CD8-positive, alpha-beta T cell (primary cell): ENCODE measurements at regions of chrX and their contacts with region 1.

Region 1: GRCh38 chrX:48737213-48737938 is 24.2 kb upstream of the GLOD5 start:
- DNase-seq: peak; percentile 73 to 97 (median 82)
- ATAC-seq: peak; percentile 95
- H3K4me3 ChIP-seq: peak overlapping the region; percentile 68 to 75
- H3K4me3 Mint-ChIP-seq: peak overlapping the region; percentile 95
- H3K27ac ChIP-seq: peak overlapping the region; percentile 76 to 94
- H3K27ac Mint-ChIP-seq: peak overlapping the region; percentile 98
- H3K4me1 ChIP-seq: peaks cover 16% of the 10 kb centered on the region
- H3K4me1 Mint-ChIP-seq: peaks cover 15% of the 10 kb centered on the region
- H3K27me3 ChIP-seq: no peaks in the 10 kb centered on the region
- H3K27me3 Mint-ChIP-seq: no peaks in the 10 kb centered on the region
- CTCF ChIP-seq: no peak

Region 2: DNA sequence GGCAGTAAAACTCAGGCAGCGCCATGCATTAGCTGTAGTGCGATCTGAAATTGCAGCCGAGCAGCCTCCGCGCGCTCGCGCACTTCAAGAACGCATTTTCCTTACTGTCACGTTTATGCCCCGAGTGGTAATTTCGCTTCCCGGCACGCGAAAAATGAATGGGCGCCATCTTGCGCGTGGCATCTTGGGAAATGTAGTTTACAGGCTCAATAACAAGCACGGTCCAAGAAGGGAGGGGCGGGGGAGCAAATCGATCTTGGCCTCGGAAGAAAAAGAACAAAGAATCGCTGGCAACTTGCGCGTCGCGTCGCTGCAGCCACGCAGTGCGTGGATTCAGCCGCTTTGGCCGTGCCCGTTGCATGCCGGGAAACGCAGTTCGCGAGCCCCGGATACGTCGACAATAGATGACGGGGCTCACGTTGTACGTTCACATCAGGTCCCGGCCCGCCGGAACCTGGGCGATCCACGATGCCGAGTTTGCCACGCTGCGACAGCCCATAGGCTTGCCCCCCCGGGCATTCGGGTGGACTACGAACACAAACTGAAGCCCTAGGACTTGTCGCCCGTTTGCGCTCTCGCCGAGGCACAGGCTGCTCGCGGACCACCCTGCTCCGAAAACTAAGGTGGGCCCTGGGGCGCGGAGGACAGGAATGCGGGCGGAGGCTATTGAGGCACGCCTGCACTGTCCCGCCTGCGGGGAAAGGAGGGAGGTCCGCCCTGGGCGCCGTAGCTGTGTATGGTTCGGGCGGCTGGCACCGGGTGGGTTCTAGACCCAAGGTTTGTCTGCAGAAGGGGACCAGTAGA is 261.4 kb before region 1 on chrX and contains the start of gene FTSJ1:
- CTCF ChIA-PET with region 1: no interaction called
- POLR2A ChIA-PET with region 1: no interaction called
- intact Hi-C with region 1: loop called in 1 of 2 experiments (anchors 2 kb)
- DNase-seq: peak; percentile 75 to 96 (median 87)
- ATAC-seq: peak; percentile 89
- H3K4me3 ChIP-seq: peak within 1 kb of the TSS; percentile 62 to 86
- H3K4me3 Mint-ChIP-seq: peak within 1 kb of the TSS; percentile 88
- H3K27ac ChIP-seq: peak within 1 kb of the TSS; percentile 85 to 88
- H3K27ac Mint-ChIP-seq: peak within 1 kb of the TSS; percentile 90
- H3K4me1 ChIP-seq: peaks cover 14% of the 10 kb centered on the region
- H3K4me1 Mint-ChIP-seq: peaks cover 30% of the 10 kb centered on the region
- H3K27me3 ChIP-seq: no peaks in the 10 kb centered on the region
- H3K27me3 Mint-ChIP-seq: no peaks in the 10 kb centered on the region
- CTCF ChIP-seq: no peak
- total RNA-seq, gene FTSJ1: 61.4 to 67.4 TPM

Region 3: DNA sequence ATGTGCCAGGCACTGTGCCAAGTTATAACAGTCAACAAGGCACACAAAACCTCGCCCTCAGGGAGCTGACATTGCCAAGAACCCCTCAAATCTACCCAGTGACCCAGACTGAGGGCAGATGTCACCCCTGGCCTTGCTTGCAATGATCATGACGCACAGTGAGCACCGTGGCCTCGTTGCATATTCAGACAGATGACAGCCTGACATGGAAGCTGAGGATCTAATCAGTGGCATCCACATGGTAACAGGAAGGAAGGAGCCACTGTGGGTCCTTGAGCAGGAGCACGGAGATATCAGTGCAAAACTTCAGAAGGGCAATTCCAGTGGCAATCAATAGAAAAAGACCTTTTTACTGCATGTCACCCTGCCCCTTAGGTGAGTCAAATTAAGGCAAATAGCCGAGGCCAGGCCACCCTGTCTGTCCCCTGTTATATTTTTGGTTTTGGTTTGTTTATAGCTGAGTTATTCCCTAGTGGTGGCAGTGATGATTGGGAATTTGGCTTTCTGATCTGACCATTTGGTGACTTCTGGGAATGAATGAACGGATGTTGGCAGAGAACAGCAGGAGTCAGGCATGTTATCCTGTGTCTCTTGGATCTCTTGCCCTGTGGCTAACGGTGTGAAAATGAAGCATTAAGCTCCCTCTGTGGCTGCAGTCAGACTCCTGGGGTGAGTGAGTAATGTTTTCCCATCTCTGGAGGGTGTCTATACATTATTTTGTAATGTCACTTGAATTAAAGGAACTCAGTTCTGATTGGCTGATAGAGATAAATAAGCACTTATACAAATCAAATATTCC is 119.6 kb before region 1 on chrX:
- CTCF ChIA-PET with region 1: no interaction called
- POLR2A ChIA-PET with region 1: no interaction called
- intact Hi-C with region 1: no loop called
- DNase-seq: no peak
- ATAC-seq: no peak
- H3K4me3 ChIP-seq: no peak overlapping the region
- H3K4me3 Mint-ChIP-seq: no peak overlapping the region
- H3K27ac ChIP-seq: no peak overlapping the region
- H3K27ac Mint-ChIP-seq: no peak overlapping the region
- H3K4me1 ChIP-seq: no peaks in the 10 kb centered on the region
- H3K4me1 Mint-ChIP-seq: no peaks in the 10 kb centered on the region
- H3K27me3 ChIP-seq: no peaks in the 10 kb centered on the region
- H3K27me3 Mint-ChIP-seq: no peaks in the 10 kb centered on the region
- CTCF ChIP-seq: no peak

Region 4: DNA sequence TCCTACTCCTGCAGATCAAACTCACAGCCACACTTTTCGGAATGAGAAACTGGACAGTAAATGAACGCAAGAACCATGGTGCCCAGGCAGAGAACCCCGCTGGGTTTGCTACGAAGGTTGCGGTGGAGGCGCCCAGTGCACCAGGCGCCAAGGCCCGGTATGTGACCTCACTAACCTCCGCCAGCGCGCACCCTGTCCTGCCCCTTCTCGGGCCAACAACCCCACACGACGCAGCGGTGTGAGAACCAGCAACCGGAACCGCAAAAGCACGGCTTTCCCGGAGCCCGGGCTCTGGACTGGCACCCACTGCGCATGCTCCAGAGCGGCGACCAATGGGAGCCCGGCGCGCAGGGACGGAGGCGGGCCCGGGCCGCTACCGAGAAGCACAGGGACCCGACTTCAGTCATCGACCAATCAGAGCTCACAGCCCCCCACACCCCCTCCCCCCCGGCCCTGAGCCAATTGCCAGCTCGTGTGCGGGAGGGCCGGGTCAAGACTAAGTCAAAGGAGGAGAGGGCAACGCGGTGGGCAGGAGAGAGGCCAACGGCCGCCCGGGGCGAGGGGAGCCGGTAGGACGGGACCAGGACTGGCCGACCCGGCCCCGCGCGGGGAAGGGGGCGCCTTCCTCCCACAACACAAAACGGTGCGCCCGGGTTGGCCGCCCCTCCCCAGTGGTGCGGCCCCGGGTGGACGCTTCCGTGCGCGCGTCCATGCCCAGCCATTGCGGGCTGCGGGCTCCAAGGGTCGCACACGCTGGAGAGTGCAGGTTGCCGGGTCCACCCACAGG is 61.1 kb before region 1 on chrX:
- CTCF ChIA-PET with region 1: no interaction called
- POLR2A ChIA-PET with region 1: interaction called, 6 read pairs
- intact Hi-C with region 1: loop called (anchors 1 to 2 kb)
- DNase-seq: peak; percentile 73 to 93 (median 83)
- ATAC-seq: peak; percentile 94
- H3K4me3 ChIP-seq: peak overlapping the region; percentile 74 to 76
- H3K4me3 Mint-ChIP-seq: peak overlapping the region; percentile 92
- H3K27ac ChIP-seq: peak overlapping the region; percentile 78 to 86
- H3K27ac Mint-ChIP-seq: peak overlapping the region; percentile 93
- H3K4me1 ChIP-seq: peaks cover 6% of the 10 kb centered on the region
- H3K4me1 Mint-ChIP-seq: peaks cover 30% of the 10 kb centered on the region
- H3K27me3 ChIP-seq: no peaks in the 10 kb centered on the region
- H3K27me3 Mint-ChIP-seq: no peaks in the 10 kb centered on the region
- CTCF ChIP-seq: no peak

Region 5: DNA sequence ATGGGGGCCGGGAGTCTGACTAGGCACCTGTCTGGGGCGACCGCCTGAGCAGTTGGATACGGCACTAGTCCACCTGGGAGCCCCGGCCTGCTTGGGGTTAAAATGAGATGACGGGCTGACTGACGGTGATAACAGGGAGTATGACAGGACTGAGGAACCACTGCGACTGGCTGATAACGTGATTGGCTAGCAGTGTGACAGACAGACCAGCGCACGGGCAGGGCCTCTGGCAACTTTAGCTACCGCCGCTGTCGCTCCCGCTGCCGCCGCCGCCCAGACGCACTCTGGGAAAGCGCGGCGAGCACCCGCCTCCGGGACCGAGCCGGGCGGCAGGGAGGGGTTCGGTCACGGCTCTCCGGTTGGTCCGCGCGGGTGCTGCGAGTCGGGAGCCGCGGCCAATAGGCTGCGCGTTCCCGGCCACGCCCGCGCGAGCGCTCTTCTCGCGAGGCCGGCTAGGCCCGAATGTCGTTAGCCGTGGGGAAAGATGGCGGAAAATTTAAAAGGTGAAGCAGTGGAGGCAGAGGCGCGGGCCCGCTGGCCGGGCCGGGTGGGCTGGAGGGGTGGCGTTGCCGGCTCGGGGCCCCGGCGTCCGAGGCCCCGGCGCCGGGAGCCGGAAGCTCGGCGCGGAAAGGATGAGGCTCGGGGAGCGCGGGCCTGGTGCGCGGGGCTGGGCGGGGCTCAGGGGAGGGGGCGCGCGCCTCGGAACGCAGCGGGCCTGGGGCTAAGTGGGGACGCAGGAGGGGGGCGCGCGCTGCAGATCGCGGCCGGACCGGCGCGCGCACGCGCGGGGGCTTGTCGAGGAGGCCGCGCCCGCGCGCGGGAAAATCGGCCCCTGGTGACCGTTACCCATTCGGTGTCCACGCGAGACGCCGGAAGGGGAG is 40.8 kb before region 1 on chrX and contains the start of gene SUV39H1:
- CTCF ChIA-PET with region 1: interaction called, 3 read pairs
- POLR2A ChIA-PET with region 1: interaction called, 24 read pairs
- intact Hi-C with region 1: loop called (anchors 1 kb)
- DNase-seq: peak; percentile 67 to 94 (median 79)
- ATAC-seq: peak; percentile 93
- H3K4me3 ChIP-seq: peak within 1 kb of the TSS; percentile 63 to 72
- H3K4me3 Mint-ChIP-seq: peak within 1 kb of the TSS; percentile 89
- H3K27ac ChIP-seq: peak within 1 kb of the TSS; percentile 85 to 87
- H3K27ac Mint-ChIP-seq: peak within 1 kb of the TSS; percentile 98
- H3K4me1 ChIP-seq: peaks cover 15% of the 10 kb centered on the region
- H3K4me1 Mint-ChIP-seq: peaks cover 27% of the 10 kb centered on the region
- H3K27me3 ChIP-seq: no peaks in the 10 kb centered on the region
- H3K27me3 Mint-ChIP-seq: no peaks in the 10 kb centered on the region
- CTCF ChIP-seq: no peak
- total RNA-seq, gene SUV39H1: 8.2 to 8.6 TPM

Region 6: DNA sequence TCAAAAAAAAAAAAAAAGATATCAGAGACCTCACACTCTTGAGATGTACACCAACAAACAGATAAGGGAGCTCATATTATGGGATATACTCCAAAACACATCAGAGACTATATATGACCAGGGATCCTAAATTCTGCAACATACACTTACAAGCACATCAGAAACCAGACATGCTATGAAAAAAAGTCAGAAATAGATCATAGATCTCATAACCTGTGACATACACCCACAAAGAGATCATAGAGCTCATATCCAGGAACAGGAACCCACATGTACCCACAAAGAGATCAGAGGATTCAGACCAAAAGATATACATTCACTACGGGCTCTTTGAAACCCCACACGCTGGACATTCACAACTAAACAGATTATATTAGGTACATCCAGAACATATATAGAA is 10.8 kb before region 1 on chrX:
- CTCF ChIA-PET with region 1: no interaction called
- POLR2A ChIA-PET with region 1: interaction called, 11 read pairs
- intact Hi-C with region 1: no loop called
- DNase-seq: peak in 1 of 9 experiments; percentile 33
- ATAC-seq: peak; percentile 54
- H3K4me3 ChIP-seq: no peak overlapping the region
- H3K4me3 Mint-ChIP-seq: no peak overlapping the region
- H3K27ac ChIP-seq: no peak overlapping the region
- H3K27ac Mint-ChIP-seq: peak overlapping the region; percentile 77
- H3K4me1 ChIP-seq: peaks cover 29% of the 10 kb centered on the region
- H3K4me1 Mint-ChIP-seq: peaks cover 48% of the 10 kb centered on the region
- H3K27me3 ChIP-seq: no peaks in the 10 kb centered on the region
- H3K27me3 Mint-ChIP-seq: no peaks in the 10 kb centered on the region
- CTCF ChIP-seq: no peak

Region 7: GRCh38 chrX:48789366-48790220 is 52.2 kb after region 1 on chrX:
- CTCF ChIA-PET with region 1: no interaction called
- POLR2A ChIA-PET with region 1: no interaction called
- intact Hi-C with region 1: no loop called
- DNase-seq: peak in 1 of 9 experiments; percentile 26
- ATAC-seq: no peak
- H3K4me3 ChIP-seq: no peak overlapping the region
- H3K4me3 Mint-ChIP-seq: peak overlapping the region; percentile 3
- H3K27ac ChIP-seq: no peak overlapping the region
- H3K27ac Mint-ChIP-seq: peak overlapping the region; percentile 18
- H3K4me1 ChIP-seq: peaks cover 5% of the 10 kb centered on the region
- H3K4me1 Mint-ChIP-seq: peaks cover 11% of the 10 kb centered on the region
- H3K27me3 ChIP-seq: no peaks in the 10 kb centered on the region
- H3K27me3 Mint-ChIP-seq: no peaks in the 10 kb centered on the region
- CTCF ChIP-seq: no peak

Region 8: GRCh38 chrX:48917139-48918001 is 180.0 kb after region 1 on chrX:
- CTCF ChIA-PET with region 1: no interaction called
- POLR2A ChIA-PET with region 1: interaction called, 4 read pairs
- intact Hi-C with region 1: loop called in 1 of 2 experiments (anchors 10 kb)
- DNase-seq: peak; percentile 77 to 93 (median 88)
- ATAC-seq: peak; percentile 37
- H3K4me3 ChIP-seq: peak overlapping the region; percentile 92 to 95
- H3K4me3 Mint-ChIP-seq: peak overlapping the region; percentile 97
- H3K27ac ChIP-seq: peak overlapping the region; percentile 75 to 100
- H3K27ac Mint-ChIP-seq: peak overlapping the region; percentile 97
- H3K4me1 ChIP-seq: peaks cover 58% of the 10 kb centered on the region
- H3K4me1 Mint-ChIP-seq: peaks cover 56% of the 10 kb centered on the region
- H3K27me3 ChIP-seq: no peaks in the 10 kb centered on the region
- H3K27me3 Mint-ChIP-seq: no peaks in the 10 kb centered on the region
- CTCF ChIP-seq: peak; percentile 77

Region 9: GRCh38 chrX:49043220-49043986 is 306.0 kb after region 1 on chrX and contains the start of gene TFE3:
- CTCF ChIA-PET with region 1: no interaction called
- POLR2A ChIA-PET with region 1: no interaction called
- intact Hi-C with region 1: loop called in 1 of 2 experiments (anchors 2 kb)
- DNase-seq: peak; percentile 88 to 98 (median 93)
- ATAC-seq: peak; percentile 89
- H3K4me3 ChIP-seq: peak within 1 kb of the TSS; percentile 50 to 56
- H3K4me3 Mint-ChIP-seq: peak within 1 kb of the TSS; percentile 84
- H3K27ac ChIP-seq: peak within 1 kb of the TSS; percentile 73 to 92
- H3K27ac Mint-ChIP-seq: peak within 1 kb of the TSS; percentile 93
- H3K4me1 ChIP-seq: peaks cover 21% of the 10 kb centered on the region
- H3K4me1 Mint-ChIP-seq: peaks cover 35% of the 10 kb centered on the region
- H3K27me3 ChIP-seq: no peaks in the 10 kb centered on the region
- H3K27me3 Mint-ChIP-seq: no peaks in the 10 kb centered on the region
- CTCF ChIP-seq: no peak
- total RNA-seq, gene TFE3: 35.7 to 39.7 TPM